Head of caudate nucleus (tissue), 42 donors: ENCODE measurements at regions of chr7 and their contacts with region 1.

Region 1: DNA sequence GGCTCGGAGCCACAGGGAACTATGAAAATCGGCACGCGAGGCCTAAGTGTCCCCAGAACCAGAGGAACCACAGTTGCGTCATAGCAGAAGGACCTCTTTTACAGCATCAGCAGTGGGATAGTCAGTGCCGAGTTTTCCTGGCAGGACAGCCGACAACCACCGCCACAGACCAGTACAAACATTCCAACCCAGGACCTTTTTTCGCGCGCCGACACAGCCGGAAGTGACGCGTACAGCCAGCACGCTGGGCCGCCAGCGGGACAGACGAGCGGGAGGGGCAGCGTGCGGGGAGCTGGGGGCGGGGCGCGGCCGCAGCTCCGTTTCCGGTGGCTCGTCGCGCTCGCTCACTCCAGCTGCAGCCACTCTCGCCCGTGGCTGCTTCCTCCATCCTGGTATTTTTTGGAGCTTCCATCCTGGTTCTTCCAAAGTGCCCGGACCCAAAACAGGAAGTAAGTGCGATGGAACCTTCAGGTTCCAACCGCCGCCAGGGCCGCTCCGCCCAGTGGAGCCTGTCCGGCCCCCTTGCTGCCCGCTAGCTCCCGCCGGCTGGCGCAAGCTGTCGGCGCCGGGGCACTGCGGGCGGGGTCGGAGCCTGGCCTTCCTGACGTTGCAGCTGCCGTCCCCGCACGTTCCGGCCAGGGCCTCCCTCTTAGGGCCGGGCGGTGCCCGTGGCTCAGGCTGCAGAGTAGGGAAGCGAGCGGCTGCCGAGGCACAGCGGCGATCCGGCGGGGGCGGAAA is at the start of gene DMTF1:
- DNase-seq: peak; percentile 88 to 98 (median 96)

Region 2: GRCh38 chr7:86926732-86927131 is 225.5 kb before region 1 on chr7:
- intact Hi-C with region 1: loop called (anchors 5 kb)
- DNase-seq: peak in 30 of 42 donors; percentile 14 to 85 (median 56)

Region 3: DNA sequence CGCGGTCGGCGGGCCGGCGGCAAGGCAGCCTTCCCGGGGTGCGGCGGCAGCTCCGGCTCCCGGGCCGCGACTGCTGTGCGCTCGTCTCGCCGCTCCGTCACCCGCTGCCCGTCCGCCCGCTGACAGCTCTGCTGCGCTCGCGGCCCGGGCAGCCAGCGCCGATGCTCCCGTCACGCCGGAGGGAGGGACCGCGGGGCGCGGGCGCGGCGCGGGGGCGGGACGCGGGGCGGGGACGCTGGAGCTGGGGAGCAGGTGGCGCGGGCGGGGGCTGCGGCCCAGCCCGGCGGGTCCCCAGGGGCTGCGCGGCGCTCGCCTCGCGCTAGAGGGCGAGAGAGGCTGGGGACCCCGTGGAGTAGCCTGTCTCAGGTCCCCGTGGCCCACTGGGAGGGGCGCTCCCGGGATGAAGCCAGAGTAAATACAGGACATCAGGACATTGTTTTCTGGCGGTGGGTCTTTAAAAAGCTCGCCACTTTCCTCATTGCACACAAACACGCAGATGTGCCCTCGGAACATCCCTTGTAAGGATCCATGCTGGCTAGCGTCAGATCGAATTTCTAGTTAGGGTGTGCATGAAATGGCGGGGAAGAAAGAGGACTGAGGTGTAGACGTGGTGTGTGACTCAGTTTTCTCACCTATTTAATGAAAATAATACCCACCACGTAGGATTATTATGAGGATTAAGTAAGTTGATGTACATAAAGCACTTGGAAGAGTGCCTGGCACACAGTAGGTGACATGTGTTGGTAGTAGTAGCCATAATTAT is 92.6 kb before region 1 on chr7 and contains the start of gene ELAPOR2:
- intact Hi-C with region 1: loop called (anchors 2 kb)
- DNase-seq: peak; percentile 70 to 95 (median 90)

Region 4: DNA sequence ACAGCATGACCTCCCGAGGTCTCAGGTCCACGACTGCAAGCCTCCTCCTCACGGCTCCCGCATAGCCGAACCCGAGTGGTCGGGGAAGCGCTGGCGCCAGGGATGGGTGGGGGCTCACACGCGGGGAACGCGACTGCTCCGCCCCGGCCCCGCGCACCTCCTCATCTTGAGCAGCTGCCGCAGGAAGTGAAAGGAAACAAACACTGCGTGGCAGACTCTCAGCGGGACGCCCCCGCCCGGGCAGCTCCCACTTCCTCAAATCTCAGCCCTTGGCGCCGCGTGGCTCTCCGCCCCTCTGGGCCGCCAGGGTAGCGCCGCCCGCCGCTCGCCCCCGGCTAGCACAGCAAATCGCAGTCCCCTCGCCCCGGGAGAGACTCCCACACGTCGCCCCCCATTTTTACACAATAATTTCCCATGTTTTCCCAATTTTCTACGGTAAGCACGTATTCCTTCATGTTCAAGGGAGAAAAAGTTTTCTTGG is 67.3 kb after region 1 on chr7 and contains the start of gene TMEM243:
- intact Hi-C with region 1: loop called (anchors 2 kb)
- DNase-seq: peak; percentile 30 to 86 (median 72)

Region 5: GRCh38 chr7:87345166-87345927 is 193.1 kb after region 1 on chr7 and contains the start of gene CROT:
- intact Hi-C with region 1: loop called (anchors 10 kb)
- DNase-seq: peak; percentile 96 to 99 (median 98)